ENCODE measurements at regions of chrX and their contacts with region 1.

Region 1: GRCh38 chrX:137171626-137172025 is 137.8 kb upstream of the GPR101 start:
- DNase-seq: no peak
- ATAC-seq: no peak
- H3K4me3 ChIP-seq: no peak overlapping the region
- H3K27ac ChIP-seq: no peak overlapping the region
- H3K4me1 ChIP-seq: no peaks in the 10 kb centered on the region
- H3K27me3 ChIP-seq: peaks cover 0 to 4% (median 0%) of the 10 kb centered on the region in 3 donors
- CTCF ChIP-seq: no peak

Region 2: GRCh38 chrX:137031517-137032340 is 139.9 kb before region 1 on chrX:
- intact Hi-C with region 1: no loop called
- DNase-seq: peak in 1 of 2 donors; percentile 18
- ATAC-seq: peak in 1 of 4 donors; percentile 65
- H3K4me3 ChIP-seq: peak overlapping the region; percentile 58
- H3K27ac ChIP-seq: no peak overlapping the region
- H3K4me1 ChIP-seq: peaks cover 5% of the 10 kb centered on the region
- H3K27me3 ChIP-seq: peaks cover 0 to 69% (median 4%) of the 10 kb centered on the region in 3 donors
- CTCF ChIP-seq: no peak

Region 3: GRCh38 chrX:138157850-138158249 is 986.2 kb after region 1 on chrX:
- intact Hi-C with region 1: loop called in 1 of 2 experiments (anchors 5 kb)
- DNase-seq: no peak
- ATAC-seq: no peak
- H3K4me3 ChIP-seq: no peak overlapping the region
- H3K27ac ChIP-seq: no peak overlapping the region
- H3K4me1 ChIP-seq: no peaks in the 10 kb centered on the region
- H3K27me3 ChIP-seq: no peaks in the 10 kb centered on the region
- CTCF ChIP-seq: no peak

Measured in psoas muscle (tissue), 8 donors.